ENCODE measurements at regions of chr7 and their contacts with region 1.

Region 1: GRCh38 chr7:151059367-151060112 is at the start of gene SLC4A2:
- DNase-seq: peak; percentile 83 to 93
- H3K4me3 ChIP-seq: peak within 1 kb of the TSS; percentile 69 to 94 (median 82)
- H3K27ac ChIP-seq: peak within 1 kb of the TSS; percentile 91 to 97 (median 96)
- H3K4me1 ChIP-seq: peaks cover 55 to 69% (median 64%) of the 10 kb centered on the region in 4 donors
- H3K27me3 ChIP-seq: no peaks in the 10 kb centered on the region
- CTCF ChIP-seq: peak in 4 of 7 experiments; percentile 24 to 59 (median 32)
- EP300 ChIP-seq: no peak
- POLR2A ChIP-seq: peak in 1 of 4 donors; percentile 21
- total RNA-seq, gene SLC4A2: 65.9 to 296 (median 128) TPM

Region 2: GRCh38 chr7:151110941-151111645 is 51.6 kb after region 1 on chr7:
- intact Hi-C with region 1: loop called (anchors 10 kb)
- DNase-seq: peak; percentile 86 to 92
- H3K4me3 ChIP-seq: no peak overlapping the region
- H3K27ac ChIP-seq: peak overlapping the region in 4 of 5 donors; percentile 3 to 47 (median 40)
- H3K4me1 ChIP-seq: peaks cover 27 to 63% (median 53%) of the 10 kb centered on the region in 4 donors
- H3K27me3 ChIP-seq: no peaks in the 10 kb centered on the region
- CTCF ChIP-seq: peak in 6 of 7 experiments; percentile 50 to 90 (median 86)
- EP300 ChIP-seq: no peak
- POLR2A ChIP-seq: no peak

Region 3: GRCh38 chr7:151125470-151125845 is 65.9 kb after region 1 on chr7:
- intact Hi-C with region 1: no loop called
- DNase-seq: peak; percentile 45 to 75
- H3K4me3 ChIP-seq: peak overlapping the region; percentile 40 to 48 (median 44)
- H3K27ac ChIP-seq: peak overlapping the region in 1 of 5 donors; percentile 13
- H3K4me1 ChIP-seq: peaks cover 14 to 32% (median 24%) of the 10 kb centered on the region in 4 donors
- H3K27me3 ChIP-seq: no peaks in the 10 kb centered on the region
- CTCF ChIP-seq: no peak
- EP300 ChIP-seq: no peak
- POLR2A ChIP-seq: no peak